Astrocyte of the spinal cord (primary cell): ENCODE measurements at regions of chr1 and their contacts with region 1.

Region 1: DNA sequence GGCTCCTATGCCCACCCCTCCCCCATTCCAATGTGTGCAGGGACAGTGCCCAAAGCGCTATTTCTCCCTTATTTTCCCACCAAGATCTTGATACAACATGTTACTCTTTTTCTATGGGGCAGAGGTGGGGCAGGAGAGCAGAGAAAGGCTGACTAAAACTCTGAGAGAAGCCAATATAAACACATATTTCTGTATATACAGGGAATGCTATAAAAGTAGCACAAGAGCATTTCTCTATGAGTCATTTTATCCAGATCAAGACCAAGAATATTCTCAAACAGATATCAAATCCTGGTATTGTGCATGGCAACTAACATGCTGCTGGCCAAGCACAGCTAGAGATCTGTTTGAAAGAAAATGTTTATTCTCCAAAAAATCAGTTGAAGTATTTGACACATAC is 7.3 kb downstream of the WDR26 start:
- DNase-seq: peak; percentile 86
- H3K4me3 ChIP-seq: no peak overlapping the region
- CTCF ChIP-seq: no peak

Region 2: DNA sequence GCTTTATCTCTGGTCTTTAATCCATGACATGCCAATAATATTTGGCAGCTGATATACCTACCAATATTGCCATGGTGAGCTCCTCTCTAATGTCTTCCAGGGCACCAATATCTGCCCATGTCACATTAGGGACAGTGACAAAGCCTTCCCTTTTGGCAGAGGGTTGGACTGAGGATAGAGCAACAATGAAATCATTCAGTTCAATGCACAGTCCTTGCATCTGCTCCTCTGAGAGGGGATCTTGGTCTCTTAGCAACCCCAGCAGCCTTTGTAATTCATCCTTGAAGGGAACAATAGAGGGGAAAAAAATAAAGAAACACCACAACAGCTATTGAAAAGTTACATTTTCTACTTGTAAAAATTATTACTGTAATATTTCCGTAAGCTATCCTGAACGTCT is 139.6 kb before region 1 on chr1:
- in situ Hi-C with region 1: no loop called
- DNase-seq: no peak
- H3K4me3 ChIP-seq: no peak overlapping the region
- CTCF ChIP-seq: no peak

Region 3: GRCh38 chr1:224377676-224378006 is 49.7 kb before region 1 on chr1:
- in situ Hi-C with region 1: loop called (anchors 10 kb)
- DNase-seq: peak; percentile 55
- H3K4me3 ChIP-seq: no peak overlapping the region
- CTCF ChIP-seq: no peak

Region 4: GRCh38 chr1:224542783-224543440 is 115.6 kb after region 1 on chr1:
- in situ Hi-C with region 1: no loop called
- DNase-seq: peak; percentile 97
- H3K4me3 ChIP-seq: no peak overlapping the region
- CTCF ChIP-seq: no peak

Region 5: DNA sequence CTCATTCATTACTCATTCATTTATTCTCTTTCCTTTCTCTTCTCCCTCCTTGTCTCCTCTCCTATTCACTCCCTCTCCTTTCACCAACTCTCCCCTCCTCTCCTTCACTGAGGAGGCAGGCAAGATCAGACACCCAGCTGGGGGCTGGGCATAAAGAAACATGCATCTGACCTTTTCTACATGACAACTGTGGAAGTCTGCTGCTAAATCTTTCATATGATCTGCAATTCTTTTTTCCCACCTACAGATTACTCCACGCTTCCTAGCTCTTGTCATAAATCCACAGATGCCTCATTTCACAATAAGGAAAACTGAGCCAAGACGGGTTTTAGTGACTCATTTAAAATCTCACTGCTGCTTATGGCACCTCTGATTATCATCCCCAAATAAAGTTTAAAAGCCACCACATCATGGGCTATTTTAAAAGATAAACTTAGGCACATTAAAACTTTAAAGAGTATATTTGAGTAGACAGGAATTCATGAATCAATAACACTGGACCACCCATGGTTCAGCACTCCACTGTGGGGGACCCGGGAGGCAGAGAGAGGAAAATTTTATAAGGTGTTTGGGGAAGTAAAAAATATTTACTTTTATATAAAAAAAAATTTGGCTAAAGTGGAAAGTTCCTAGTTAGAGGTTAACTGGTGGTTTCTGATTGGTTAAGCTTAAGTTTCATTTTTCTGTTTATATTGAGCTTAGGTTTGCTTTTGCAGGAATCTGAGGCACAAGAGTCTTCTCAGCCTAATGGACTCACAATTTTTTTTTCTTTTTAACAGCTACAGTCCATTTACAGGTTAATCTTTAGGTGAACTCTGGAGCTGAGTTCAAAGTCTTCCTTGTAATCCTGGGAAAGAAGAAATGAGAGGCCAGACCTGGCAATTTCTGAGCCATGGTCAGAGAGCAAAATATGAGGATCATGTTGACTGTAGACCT is 446.4 kb after region 1 on chr1:
- in situ Hi-C with region 1: no loop called
- DNase-seq: no peak
- H3K4me3 ChIP-seq: no peak overlapping the region
- CTCF ChIP-seq: no peak